WTC11 (cell line): ENCODE measurements at regions of chr3 and their contacts with region 1.

Region 1: GRCh38 chr3:101195951-101196713 is 124.2 kb downstream of the IMPG2 start:
- DNase-seq: no peak
- ATAC-seq: peak; percentile 81
- H3K4me3 Mint-ChIP-seq: no peak overlapping the region
- H3K27ac Mint-ChIP-seq: no peak overlapping the region
- H3K4me1 Mint-ChIP-seq: peaks cover 11% of the 10 kb centered on the region
- H3K27me3 Mint-ChIP-seq: no peaks in the 10 kb centered on the region
- CTCF ChIP-seq: no peak

Region 2: DNA sequence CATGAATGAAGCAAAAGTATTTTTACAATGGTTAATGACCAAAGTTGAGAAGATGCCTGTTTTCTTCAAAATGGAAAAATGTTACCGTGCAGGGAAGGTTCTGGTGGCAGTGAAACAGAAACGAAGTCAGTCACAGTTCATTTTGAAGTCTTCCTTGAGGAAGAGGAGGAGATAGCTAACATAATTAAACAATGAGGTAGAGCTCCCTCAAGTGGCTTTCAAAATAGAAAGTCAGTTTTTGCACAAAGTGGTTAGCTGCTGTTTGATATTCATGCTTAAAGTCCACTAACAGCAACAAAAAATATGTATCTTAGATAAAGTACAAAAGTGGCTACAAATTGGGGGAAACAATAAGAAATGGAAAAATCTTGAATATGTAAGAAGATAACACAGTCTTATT is 399.6 kb before region 1 on chr3:
- CTCF ChIA-PET with region 1: interaction called, 12 read pairs
- POLR2A ChIA-PET with region 1: no interaction called
- DNase-seq: no peak
- ATAC-seq: peak; percentile 58
- H3K4me3 Mint-ChIP-seq: no peak overlapping the region
- H3K27ac Mint-ChIP-seq: no peak overlapping the region
- H3K4me1 Mint-ChIP-seq: peaks cover 5% of the 10 kb centered on the region; the same call in 1 of the 2 replicates
- H3K27me3 Mint-ChIP-seq: no peaks in the 10 kb centered on the region; the same call in 1 of the 2 replicates
- CTCF ChIP-seq: no peak

Region 3: GRCh38 chr3:100825574-100825973 is 370.6 kb before region 1 on chr3:
- CTCF ChIA-PET with region 1: interaction called, 29 read pairs
- POLR2A ChIA-PET with region 1: no interaction called
- DNase-seq: no peak
- ATAC-seq: no peak
- H3K4me3 Mint-ChIP-seq: no peak overlapping the region
- H3K27ac Mint-ChIP-seq: no peak overlapping the region
- H3K4me1 Mint-ChIP-seq: no peaks in the 10 kb centered on the region
- H3K27me3 Mint-ChIP-seq: no peaks in the 10 kb centered on the region
- CTCF ChIP-seq: no peak

Region 4: DNA sequence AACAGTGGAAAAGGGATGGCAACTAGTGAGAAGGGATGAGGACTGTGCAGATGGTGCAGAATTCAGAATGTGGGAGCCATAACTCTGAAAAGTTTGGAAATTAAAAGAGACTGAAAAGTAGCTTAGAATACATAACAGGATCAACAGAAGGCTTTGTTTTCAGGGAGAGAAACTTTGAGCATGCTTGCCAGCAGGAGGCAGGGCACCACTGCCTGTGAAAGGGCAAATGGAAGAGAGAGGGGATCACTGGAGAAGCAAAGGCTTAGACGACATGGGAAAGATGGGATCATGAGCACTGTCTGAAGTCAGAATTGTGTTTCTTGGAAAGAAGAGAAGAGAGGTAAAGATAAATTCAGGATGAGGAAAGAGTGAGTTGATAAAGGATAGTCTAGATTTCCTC is 302.5 kb before region 1 on chr3:
- CTCF ChIA-PET with region 1: interaction called, 38 read pairs
- POLR2A ChIA-PET with region 1: interaction called, 3 read pairs
- DNase-seq: peak; percentile 65
- ATAC-seq: peak; percentile 85
- H3K4me3 Mint-ChIP-seq: no peak overlapping the region
- H3K27ac Mint-ChIP-seq: no peak overlapping the region
- H3K4me1 Mint-ChIP-seq: peaks cover 7% of the 10 kb centered on the region
- H3K27me3 Mint-ChIP-seq: no peaks in the 10 kb centered on the region
- CTCF ChIP-seq: peak; percentile 43; the same call in 1 of the 2 replicates

Region 5: DNA sequence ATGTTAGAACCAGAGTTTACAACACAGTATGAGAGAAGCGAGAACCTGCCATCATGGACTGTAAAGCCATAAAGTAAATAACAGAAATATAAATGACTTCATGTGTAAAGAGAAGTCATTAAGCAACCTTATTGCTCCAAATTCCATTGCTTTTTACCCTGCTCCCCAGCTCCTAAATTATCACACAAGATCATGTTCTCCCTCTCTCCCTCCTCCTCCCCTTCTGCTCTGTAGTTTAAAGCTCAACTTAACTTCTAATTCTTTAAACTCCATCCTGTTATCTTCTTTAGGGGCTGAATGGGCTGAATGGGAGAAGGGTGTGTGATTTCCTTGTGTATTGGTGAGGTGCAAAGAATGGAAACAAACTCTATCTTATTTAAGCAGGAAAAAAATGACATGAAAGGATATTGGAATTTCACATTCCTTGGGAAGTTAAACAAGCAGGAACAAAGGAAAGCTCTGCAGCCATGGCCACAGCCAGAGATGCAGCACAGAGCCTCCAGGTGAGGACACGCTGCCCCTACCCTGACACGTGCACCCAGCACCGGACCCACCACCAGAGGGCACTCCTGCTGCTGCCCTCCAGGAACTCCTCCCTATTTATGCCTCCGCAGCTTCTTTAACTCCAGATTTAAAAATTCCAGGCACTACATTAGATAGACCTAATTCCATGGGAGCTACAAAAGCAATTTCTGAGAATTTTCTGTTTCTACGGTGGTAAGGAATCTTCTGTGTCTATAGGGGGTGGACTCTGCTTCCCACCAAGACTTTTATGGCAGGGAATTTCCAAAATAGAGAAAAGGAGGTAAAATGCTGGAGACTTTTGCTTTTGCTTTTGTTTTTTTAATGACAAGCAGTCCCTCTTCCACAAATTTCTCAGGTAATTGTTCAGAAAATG is 126.0 kb before region 1 on chr3:
- CTCF ChIA-PET with region 1: interaction called, 48 read pairs
- POLR2A ChIA-PET with region 1: no interaction called
- DNase-seq: peak; percentile 92
- ATAC-seq: peak; percentile 100
- H3K4me3 Mint-ChIP-seq: no peak overlapping the region
- H3K27ac Mint-ChIP-seq: no peak overlapping the region
- H3K4me1 Mint-ChIP-seq: peaks cover 9% of the 10 kb centered on the region
- H3K27me3 Mint-ChIP-seq: 0 out of 2 replicates have a peak, but pooled peaks cover 4% of the 10 kb centered on the region
- CTCF ChIP-seq: peak; percentile 76

Region 6: DNA sequence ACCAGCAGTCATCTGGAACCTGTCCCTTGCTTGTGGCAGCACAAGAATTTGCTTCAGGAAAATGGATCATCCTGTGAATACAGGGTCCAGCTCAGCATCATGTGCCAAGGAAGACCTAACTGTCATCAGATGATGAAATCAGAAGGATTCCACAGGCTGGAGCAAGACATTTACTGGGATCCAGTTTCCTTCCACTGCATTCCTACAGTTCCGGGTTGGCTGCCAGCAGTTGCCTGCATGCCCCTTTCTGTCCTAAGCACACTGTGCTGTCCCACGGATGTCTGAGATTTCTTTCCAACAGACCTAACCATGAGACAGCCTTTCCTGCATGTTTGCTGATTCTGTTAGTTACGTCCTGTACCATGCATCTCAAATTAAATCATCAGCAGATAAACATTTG is 16.5 kb before region 1 on chr3:
- CTCF ChIA-PET with region 1: interaction called, 12 read pairs
- POLR2A ChIA-PET with region 1: no interaction called
- DNase-seq: no peak
- ATAC-seq: no peak
- H3K4me3 Mint-ChIP-seq: no peak overlapping the region
- H3K27ac Mint-ChIP-seq: no peak overlapping the region
- H3K4me1 Mint-ChIP-seq: no peaks in the 10 kb centered on the region
- H3K27me3 Mint-ChIP-seq: no peaks in the 10 kb centered on the region
- CTCF ChIP-seq: no peak

Region 7: GRCh38 chr3:101381809-101382208 is 185.7 kb after region 1 on chr3:
- CTCF ChIA-PET with region 1: interaction called, 14 read pairs
- POLR2A ChIA-PET with region 1: no interaction called
- DNase-seq: no peak
- ATAC-seq: peak; percentile 13; the same call in 1 of the 2 replicates
- H3K4me3 Mint-ChIP-seq: no peak overlapping the region
- H3K27ac Mint-ChIP-seq: no peak overlapping the region
- H3K4me1 Mint-ChIP-seq: peaks cover 9% of the 10 kb centered on the region
- H3K27me3 Mint-ChIP-seq: no peaks in the 10 kb centered on the region
- CTCF ChIP-seq: 0 out of 2 replicates have a peak, but pooled peaks have one; percentile 17